ENCODE measurements at regions of chr12 and their contacts with region 1.

Region 1: GRCh38 chr12:96445691-96446583 is 43.4 kb upstream of the CFAP54 start:
- DNase-seq: peak; percentile 85
- ATAC-seq: peak; percentile 97
- H3K4me3 Mint-ChIP-seq: peak overlapping the region; percentile 66
- H3K27ac Mint-ChIP-seq: peak overlapping the region; percentile 97
- H3K4me1 Mint-ChIP-seq: peaks cover 54% of the 10 kb centered on the region
- H3K27me3 Mint-ChIP-seq: no peaks in the 10 kb centered on the region

Region 2: GRCh38 chr12:96434107-96434506 is 11.8 kb before region 1 on chr12:
- CTCF ChIA-PET with region 1: interaction called, 9 read pairs
- POLR2A ChIA-PET with region 1: interaction called, 15 read pairs
- DNase-seq: peak; percentile 90
- ATAC-seq: peak; percentile 97
- H3K4me3 Mint-ChIP-seq: peak overlapping the region; percentile 5
- H3K27ac Mint-ChIP-seq: peak overlapping the region; percentile 82
- H3K4me1 Mint-ChIP-seq: peaks cover 44% of the 10 kb centered on the region
- H3K27me3 Mint-ChIP-seq: no peaks in the 10 kb centered on the region

Region 3: DNA sequence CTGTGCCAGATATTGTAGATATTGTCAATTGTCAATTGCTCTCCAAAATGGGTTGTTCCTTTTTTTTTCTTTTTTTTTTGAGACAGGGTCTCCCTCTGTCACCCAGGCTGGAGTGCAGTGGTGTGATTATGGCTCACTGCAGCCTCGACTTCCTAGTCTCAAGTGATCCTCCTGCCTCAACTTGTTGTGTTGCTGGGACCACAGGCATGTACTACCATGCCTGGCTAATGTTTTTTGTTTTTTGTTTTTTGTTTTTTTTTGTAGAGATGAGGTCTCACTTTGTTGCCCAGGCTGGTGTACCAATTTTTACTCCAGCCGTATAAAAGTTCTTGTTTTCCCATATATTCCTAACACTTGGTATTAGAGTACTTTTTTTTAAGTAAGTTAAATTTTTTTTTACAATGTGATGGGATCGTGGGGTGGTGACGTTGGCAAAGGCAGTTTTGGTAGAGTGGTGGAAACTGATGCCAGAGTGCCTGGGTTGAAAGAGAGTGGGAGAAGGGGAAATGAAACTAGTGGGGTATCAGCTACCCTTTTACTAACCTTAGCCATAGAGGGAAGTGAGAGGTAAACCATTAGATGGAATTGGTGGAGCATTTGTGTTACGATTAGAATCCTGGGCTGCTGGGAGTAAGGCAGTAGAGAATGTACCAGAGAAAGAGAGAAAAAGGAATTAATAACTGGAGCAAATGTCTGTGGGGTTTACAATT is 10.5 kb after region 1 on chr12:
- CTCF ChIA-PET with region 1: interaction called, 12 read pairs
- POLR2A ChIA-PET with region 1: interaction called, 5 read pairs
- DNase-seq: no peak
- ATAC-seq: no peak
- H3K4me3 Mint-ChIP-seq: no peak overlapping the region
- H3K27ac Mint-ChIP-seq: no peak overlapping the region
- H3K4me1 Mint-ChIP-seq: peaks cover 7% of the 10 kb centered on the region
- H3K27me3 Mint-ChIP-seq: no peaks in the 10 kb centered on the region

Region 4: DNA sequence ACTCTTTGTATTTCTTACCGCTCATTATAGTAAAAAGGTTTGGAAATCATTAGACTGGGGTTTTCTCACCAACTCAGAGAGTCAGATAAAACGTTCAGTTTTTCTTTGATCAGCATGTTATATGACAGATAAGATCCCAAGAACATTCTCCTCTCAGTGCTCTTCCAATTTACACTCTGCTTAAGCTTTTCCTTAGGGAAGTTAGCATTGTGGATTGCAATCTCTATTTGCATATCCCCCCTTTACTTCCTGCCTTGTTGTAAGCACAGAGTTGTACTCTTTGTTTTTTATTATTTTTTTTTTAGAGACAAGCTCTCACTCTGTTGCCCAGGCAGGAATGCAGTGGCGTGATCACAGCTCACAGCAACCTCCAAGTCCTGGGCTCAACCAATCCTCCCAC is 32.1 kb after region 1 on chr12:
- CTCF ChIA-PET with region 1: no interaction called
- POLR2A ChIA-PET with region 1: no interaction called
- DNase-seq: no peak
- ATAC-seq: no peak
- H3K4me3 Mint-ChIP-seq: no peak overlapping the region
- H3K27ac Mint-ChIP-seq: no peak overlapping the region
- H3K4me1 Mint-ChIP-seq: peaks cover 11% of the 10 kb centered on the region
- H3K27me3 Mint-ChIP-seq: no peaks in the 10 kb centered on the region

Region 5: GRCh38 chr12:96489103-96490056 is 43.4 kb after region 1 on chr12 and contains the start of gene CFAP54:
- CTCF ChIA-PET with region 1: interaction called, 18 read pairs
- POLR2A ChIA-PET with region 1: interaction called, 4 read pairs
- DNase-seq: peak; percentile 96
- ATAC-seq: peak; percentile 84
- H3K4me3 Mint-ChIP-seq: peak within 1 kb of the TSS; percentile 86
- H3K27ac Mint-ChIP-seq: peak within 1 kb of the TSS; percentile 53
- H3K4me1 Mint-ChIP-seq: peaks cover 35% of the 10 kb centered on the region
- H3K27me3 Mint-ChIP-seq: peaks cover 12% of the 10 kb centered on the region
- total RNA-seq, gene CFAP54: 0.18 to 1.2 TPM

Region 6: GRCh38 chr12:96810057-96810456 is 364.1 kb after region 1 on chr12:
- CTCF ChIA-PET with region 1: no interaction called
- POLR2A ChIA-PET with region 1: no interaction called
- DNase-seq: no peak
- ATAC-seq: no peak
- H3K4me3 Mint-ChIP-seq: no peak overlapping the region
- H3K27ac Mint-ChIP-seq: no peak overlapping the region
- H3K4me1 Mint-ChIP-seq: no peaks in the 10 kb centered on the region
- H3K27me3 Mint-ChIP-seq: no peaks in the 10 kb centered on the region